PC-3 (cell line): ENCODE measurements at regions of chr3 and their contacts with region 1.

Region 1: GRCh38 chr3:142595951-142596725 is at the start of gene PLS1:
- DNase-seq: peak; percentile 91
- ATAC-seq: peak; percentile 81
- H3K4me3 ChIP-seq: peak within 1 kb of the TSS; percentile 82
- H3K27ac ChIP-seq: peak within 1 kb of the TSS; percentile 91
- H3K4me1 ChIP-seq: peaks cover 23% of the 10 kb centered on the region
- H3K27me3 ChIP-seq: no peaks in the 10 kb centered on the region
- CTCF ChIP-seq: no peak
- total RNA-seq, gene PLS1: 18.7 and 20.1 TPM in 2 replicates

Region 2: GRCh38 chr3:142613491-142613890 is 17.4 kb after region 1 on chr3:
- CTCF ChIA-PET with region 1: interaction called, 3 read pairs
- POLR2A ChIA-PET with region 1: no interaction called
- intact Hi-C with region 1: loop called (anchors 2 kb)
- DNase-seq: peak; percentile 64
- ATAC-seq: peak; percentile 93
- H3K4me3 ChIP-seq: no peak overlapping the region
- H3K27ac ChIP-seq: peak overlapping the region; percentile 69
- H3K4me1 ChIP-seq: peaks cover 26% of the 10 kb centered on the region
- H3K27me3 ChIP-seq: no peaks in the 10 kb centered on the region
- CTCF ChIP-seq: no peak

Region 3: DNA sequence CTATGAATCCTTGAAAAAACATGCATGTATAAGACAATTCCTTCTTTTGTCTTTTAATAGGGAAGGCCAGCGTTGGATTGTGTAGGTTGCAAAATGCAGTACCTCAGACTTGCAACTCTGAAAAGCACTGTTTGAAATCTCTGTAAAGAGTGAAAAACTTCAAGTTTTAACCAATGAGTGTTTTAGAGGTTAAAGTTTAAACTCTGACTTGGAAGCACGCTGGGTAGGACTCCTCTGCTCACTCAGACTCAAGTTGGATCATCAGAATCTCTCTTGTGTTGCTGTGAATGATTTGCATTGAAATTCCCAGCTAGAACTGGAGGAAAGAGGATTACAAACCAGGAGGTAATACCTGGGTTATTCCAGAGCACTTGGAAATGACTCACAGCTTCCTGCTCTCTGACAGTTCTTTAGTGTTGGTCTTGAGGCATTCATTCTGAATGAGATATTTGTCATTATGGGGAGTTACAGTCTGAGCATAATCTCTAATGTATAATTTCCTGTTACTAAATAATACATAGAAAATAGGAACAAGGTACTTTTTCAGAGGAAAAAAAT is 49.2 kb after region 1 on chr3:
- CTCF ChIA-PET with region 1: no interaction called
- POLR2A ChIA-PET with region 1: interaction called, 9 read pairs
- intact Hi-C with region 1: loop called (anchors 1 kb)
- DNase-seq: peak; percentile 82
- ATAC-seq: peak; percentile 86
- H3K4me3 ChIP-seq: peak overlapping the region; percentile 28; the same call in 1 of the 2 replicates
- H3K27ac ChIP-seq: peak overlapping the region; percentile 85
- H3K4me1 ChIP-seq: peaks cover 46% of the 10 kb centered on the region
- H3K27me3 ChIP-seq: no peaks in the 10 kb centered on the region
- CTCF ChIP-seq: no peak

Region 4: GRCh38 chr3:142664819-142665218 is 68.7 kb after region 1 on chr3:
- CTCF ChIA-PET with region 1: no interaction called
- POLR2A ChIA-PET with region 1: interaction called, 11 read pairs
- intact Hi-C with region 1: loop called (anchors 5 kb)
- DNase-seq: peak; percentile 5
- ATAC-seq: 0 out of 2 replicates have a peak, but pooled peaks have one; percentile 48
- H3K4me3 ChIP-seq: no peak overlapping the region
- H3K27ac ChIP-seq: peak overlapping the region; percentile 60
- H3K4me1 ChIP-seq: peaks cover 22% of the 10 kb centered on the region
- H3K27me3 ChIP-seq: no peaks in the 10 kb centered on the region
- CTCF ChIP-seq: no peak

Region 5: GRCh38 chr3:142723968-142724681 is 128.0 kb after region 1 on chr3 and contains the start of gene TRPC1:
- CTCF ChIA-PET with region 1: no interaction called
- POLR2A ChIA-PET with region 1: no interaction called
- intact Hi-C with region 1: loop called (anchors 10 kb)
- DNase-seq: peak; percentile 67
- ATAC-seq: peak; percentile 87
- H3K4me3 ChIP-seq: peak within 1 kb of the TSS; percentile 92
- H3K27ac ChIP-seq: no peak within 1 kb of the TSS
- H3K4me1 ChIP-seq: no peaks in the 10 kb centered on the region
- H3K27me3 ChIP-seq: no peaks in the 10 kb centered on the region
- CTCF ChIP-seq: no peak
- total RNA-seq, gene TRPC1: 1.7 and 1.9 TPM in 2 replicates